HepG2 (cell line): ENCODE measurements at regions of chr10 and their contacts with region 1.

Region 1: DNA sequence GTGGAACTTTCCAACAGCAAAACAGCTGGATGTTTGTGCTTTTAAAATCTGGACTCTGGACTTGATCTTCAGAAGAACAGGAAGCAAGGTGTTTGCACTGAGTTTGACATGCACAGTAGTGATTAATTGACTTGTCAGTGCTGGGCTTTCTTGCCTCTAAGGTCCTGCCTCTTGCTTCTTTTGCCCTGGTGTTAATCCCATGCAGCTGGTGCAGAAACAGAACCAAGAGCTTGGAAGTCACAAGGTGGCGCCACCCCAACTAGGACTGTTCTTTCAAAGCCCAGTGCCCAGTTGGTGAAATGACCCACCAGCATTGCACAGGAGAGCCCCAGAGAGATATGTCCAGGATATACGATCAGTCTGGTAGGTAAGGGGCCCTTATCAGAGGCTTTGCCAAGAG is 66.8 kb upstream of the SEPHS1 start:
- DNase-seq: peak; percentile 88
- ATAC-seq: peak; percentile 93
- H3K4me3 ChIP-seq: no peak overlapping the region
- H3K27ac ChIP-seq: peak overlapping the region; percentile 28
- H3K4me1 ChIP-seq: peaks cover 51% of the 10 kb centered on the region
- H3K27me3 ChIP-seq: no peaks in the 10 kb centered on the region; a peak in 1 of 5 replicates
- CTCF ChIP-seq: peak; percentile 83
- EP300 ChIP-seq: peak in 1 of 2 experiments; percentile 83; a peak in 2 of 4 replicates
- POLR2A ChIP-seq: no peak
- RAD21 ChIP-seq: peak; percentile 43; the same call in 1 of the 2 replicates

Region 2: GRCh38 chr10:13440185-13441061 is 25.5 kb after region 1 on chr10:
- CTCF ChIA-PET with region 1: interaction called, 16 read pairs
- POLR2A ChIA-PET with region 1: no interaction called
- in situ Hi-C with region 1: no loop called
- intact Hi-C with region 1: loop called (anchors 1 kb)
- DNase-seq: peak; percentile 20
- ATAC-seq: peak; percentile 91
- H3K4me3 ChIP-seq: peak overlapping the region; percentile 40 to 76 (median 63); a peak in 5 of 6 replicates
- H3K27ac ChIP-seq: no peak overlapping the region
- H3K4me1 ChIP-seq: peaks cover 24% of the 10 kb centered on the region
- H3K27me3 ChIP-seq: peaks cover 2 to 12% of the 10 kb centered on the region in 2 experiments; a peak in 3 of 5 replicates
- CTCF ChIP-seq: peak; percentile 93
- EP300 ChIP-seq: no peak
- POLR2A ChIP-seq: no peak
- RAD21 ChIP-seq: peak; percentile 89

Region 3: DNA sequence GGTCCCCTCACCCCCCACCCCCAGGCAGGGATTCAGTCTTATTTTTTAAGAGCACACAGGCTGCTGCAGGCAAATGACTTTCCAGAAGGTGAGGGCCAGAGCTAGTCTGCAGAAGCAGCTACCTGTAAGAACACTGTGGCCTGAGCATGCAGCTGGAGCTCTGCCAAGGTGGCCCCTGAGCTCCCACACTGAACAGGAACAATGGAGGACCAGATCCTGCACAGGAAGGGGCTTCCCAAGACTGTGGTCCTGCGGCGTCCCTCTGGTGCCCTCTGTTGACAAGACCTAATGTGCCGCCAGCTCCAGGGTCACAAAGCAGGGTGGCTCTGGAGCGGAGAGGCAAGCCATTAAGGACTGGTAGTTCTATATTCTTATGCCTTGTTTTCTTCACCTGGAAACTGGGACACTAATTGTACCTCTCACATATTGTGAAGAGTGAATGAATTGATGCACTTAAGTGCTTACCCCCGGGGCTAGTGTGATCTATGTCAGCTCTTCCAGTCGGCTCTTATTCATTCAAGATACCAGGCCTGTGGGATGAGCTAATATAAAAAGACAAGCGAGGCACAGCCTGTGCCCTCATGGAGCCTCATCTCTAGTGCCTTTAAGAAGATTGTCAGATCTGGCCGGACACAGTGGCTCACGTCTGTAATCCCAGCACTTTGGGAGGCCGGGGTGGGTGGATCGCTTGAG is 121.9 kb after region 1 on chr10:
- CTCF ChIA-PET with region 1: interaction called, 5 read pairs
- POLR2A ChIA-PET with region 1: no interaction called
- in situ Hi-C with region 1: loop called (anchors 10 kb)
- intact Hi-C with region 1: loop called (anchors 1 kb)
- DNase-seq: peak; percentile 65
- ATAC-seq: peak; percentile 99
- H3K4me3 ChIP-seq: no peak overlapping the region; a peak in 1 of 6 replicates
- H3K27ac ChIP-seq: no peak overlapping the region
- H3K4me1 ChIP-seq: no peaks in the 10 kb centered on the region
- H3K27me3 ChIP-seq: peaks cover 1 to 24% of the 10 kb centered on the region in 2 experiments; a peak in 3 of 5 replicates
- CTCF ChIP-seq: peak; percentile 96
- EP300 ChIP-seq: no peak
- POLR2A ChIP-seq: no peak
- RAD21 ChIP-seq: peak; percentile 76; the same call in 1 of the 2 replicates